Right ventricle myocardium inferior (tissue), 1 donor: ENCODE measurements at regions of chr11 and their contacts with region 1.

Region 1: DNA sequence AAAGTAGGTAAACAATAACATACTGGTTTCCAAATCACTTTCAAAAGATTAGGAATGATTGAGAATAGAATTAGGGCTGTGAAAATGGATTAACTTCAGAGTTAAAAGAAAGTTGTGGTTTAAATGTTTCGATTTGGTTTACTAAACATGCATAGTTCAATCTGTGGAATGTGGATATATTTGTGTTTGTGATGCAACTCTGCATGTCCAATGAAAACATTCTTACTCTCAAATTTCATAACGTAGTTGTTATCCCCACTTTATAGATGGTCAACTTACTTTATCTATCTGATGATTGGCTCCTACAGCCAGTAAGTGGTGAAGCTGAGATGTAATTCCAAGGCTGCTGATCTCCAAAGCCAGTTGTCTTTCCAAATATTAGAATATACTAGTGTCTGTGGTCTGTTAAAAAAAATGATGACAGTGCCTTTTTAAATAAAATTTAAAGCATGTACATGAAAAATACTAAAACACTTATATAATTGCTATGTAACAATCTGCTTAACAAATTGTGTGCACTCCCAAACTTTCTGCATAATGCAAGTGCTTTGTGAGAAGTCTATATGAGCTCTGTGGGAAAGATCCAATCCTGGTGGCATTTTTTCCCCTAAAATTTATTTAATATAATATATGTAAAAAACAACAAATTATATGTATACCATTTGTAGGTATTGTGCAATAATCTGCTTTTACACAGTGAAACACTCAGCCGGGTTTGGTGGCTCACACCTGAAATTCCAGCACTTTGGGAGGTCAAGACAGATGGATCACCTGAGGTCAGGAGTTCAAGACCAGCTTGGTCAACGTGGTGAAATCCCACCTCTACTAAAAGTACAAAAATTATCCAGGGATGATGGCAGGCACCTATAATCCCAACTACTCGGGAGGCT is 9.7 kb upstream of the SIK3 start:
- DNase-seq: no peak
- ATAC-seq: no peak

Region 2: DNA sequence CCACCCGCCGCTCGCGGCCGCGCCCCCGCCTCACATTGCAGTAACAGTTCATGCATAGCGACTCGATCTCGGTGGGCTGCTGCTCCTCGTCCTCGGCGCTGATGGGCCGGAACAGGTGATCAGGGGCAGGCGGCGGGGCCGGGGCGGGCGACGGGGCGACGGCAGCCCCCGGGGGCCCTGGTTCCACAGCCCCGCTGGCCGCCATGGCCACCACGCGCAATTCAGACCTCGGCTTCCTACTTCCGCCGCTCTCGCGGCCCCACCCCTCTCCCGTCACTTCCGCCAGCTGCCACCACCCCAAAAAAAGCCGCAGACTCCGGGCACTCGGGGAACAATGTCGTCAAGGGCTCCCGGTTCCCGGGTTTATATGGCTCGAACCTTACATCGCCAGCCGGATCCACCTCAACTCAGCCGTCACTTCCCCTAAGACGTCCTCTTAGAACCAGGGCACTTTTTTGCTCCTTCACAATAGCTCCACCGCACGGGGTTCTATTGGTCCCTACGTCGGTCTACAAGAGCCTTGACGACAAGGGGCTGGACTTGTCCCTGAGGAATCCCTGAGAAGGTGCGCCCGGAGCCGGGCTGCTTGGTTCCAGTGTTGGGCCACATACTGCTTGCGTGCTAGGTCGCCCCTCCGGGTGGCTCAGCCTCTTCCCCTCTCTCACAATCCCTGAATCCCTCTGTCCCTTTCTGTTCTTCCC is 320.0 kb before region 1 on chr11 and contains the start of gene ZPR1:
- intact Hi-C with region 1: loop called (anchors 2 kb)
- DNase-seq: peak; percentile 94
- ATAC-seq: peak; percentile 83
- total RNA-seq, gene ZPR1: 23.3 TPM

Region 3: DNA sequence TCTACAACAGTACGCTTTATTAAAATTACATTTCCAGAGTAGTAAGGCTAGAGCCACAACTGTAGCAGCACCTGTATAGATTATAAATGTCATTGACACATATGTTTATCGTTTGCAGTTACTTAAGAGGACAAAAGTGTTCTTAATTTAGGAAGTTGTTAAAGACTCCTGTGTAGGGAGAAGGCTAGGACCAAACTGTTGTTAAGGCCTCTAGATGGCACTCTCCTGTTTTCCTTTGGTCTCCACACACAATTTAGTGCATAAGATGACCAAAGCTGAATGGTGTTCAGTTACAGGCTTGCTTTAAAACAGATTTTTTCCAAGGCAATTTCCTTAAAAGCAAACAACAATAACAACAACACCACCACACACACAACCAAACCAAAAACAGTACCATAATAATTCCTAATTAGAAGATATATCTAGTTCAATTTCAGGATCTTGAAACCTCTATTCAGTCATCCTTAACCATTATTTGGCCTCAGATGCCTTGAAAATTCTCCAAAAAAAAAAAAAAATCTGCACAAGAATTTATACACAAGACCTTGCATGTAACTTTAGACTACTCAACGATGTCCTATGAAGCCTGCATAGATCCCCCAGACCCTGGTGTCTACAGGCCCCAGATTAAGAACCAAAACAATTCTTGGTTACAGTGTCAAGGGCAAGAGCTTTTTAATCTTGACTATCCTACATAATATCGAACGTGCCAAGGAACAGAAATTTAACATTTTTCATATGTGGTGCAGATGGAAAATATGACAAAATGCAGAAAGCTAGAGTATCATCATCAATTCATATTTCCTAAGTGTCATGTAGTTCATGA is 227.9 kb before region 1 on chr11:
- intact Hi-C with region 1: loop called (anchors 2 kb)
- DNase-seq: no peak
- ATAC-seq: peak; percentile 79

Region 4: DNA sequence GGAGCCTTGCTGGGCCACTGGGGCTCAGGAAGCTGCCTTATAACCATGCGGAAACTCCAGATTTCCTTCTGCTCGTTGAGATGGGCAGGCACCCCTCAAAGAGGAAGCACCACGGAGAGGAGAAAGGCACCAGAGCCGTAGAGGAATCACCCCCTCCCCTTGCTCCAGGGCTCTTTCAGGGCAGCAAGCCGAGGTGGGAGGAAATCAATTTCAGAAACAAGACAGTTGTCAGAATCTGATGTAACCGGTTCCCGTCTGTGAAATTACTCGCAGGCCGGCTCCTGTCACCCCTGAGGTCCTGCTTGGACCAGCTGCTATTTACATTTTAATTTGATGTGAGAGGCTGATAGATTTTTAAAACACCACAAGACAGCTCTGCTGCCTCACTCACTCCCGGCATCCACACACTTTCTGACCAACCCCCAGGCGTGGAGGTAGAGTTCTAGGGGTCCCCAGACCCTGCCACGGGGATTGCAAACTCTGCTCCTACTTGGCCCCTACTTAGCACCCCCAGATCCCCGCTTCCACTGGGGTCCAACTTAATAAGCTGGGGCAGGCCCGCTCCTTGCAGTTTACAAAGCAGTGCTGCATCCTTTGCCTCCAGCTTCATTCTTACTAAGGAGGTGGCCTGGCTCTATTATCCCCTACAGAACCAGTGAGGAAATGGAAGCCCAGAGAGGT is 382.2 kb after region 1 on chr11:
- intact Hi-C with region 1: no loop called
- DNase-seq: no peak
- ATAC-seq: no peak